ENCODE measurements at regions of chr1 and their contacts with region 1.

Region 1: DNA sequence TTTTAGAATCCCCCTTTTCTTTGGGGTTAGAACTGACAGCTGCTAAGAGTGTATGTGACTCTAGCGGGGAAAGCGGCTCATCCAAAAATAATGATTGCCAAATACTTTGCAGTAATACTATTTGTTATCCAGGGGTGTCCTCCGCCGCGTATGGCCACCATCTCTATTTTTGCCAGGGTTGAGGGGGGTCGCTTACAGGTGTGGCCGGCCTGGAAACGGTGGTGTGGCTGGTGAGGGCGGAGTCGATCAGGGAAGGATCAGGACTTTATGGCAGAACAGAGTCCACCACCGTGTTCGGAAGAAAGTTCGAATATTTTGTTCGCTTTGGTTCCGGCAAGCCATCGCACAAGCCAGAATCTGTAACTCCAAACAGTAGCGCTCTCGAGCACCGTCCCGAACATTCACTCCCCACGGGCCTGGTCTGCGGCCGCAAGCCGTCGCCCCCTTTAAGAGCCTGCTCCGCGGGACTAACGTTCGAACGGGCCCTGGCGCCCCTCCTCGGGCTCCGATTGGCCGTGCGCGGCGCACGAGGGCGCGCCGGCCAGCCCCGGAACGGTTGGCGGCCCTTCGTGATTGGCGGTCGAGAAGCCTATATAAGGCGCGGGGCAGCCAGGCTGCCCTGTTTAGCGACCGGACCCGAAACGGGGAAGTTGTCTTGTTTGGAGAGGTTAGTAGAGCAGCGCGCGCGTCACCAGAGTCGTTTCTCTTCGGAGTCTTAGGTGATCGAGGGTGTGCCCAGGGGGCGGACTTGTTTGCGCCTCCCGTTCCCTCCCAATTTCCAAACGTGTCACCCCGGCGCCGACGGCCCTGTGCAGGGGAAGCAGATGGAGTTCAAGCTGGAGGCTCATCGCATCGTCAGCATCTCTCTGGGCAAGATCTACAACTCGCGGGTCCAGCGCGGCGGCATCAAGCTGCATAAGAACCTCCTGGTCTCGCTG is at the start of gene IER5:
- DNase-seq: peak; percentile 84 to 98 (median 94)
- ATAC-seq: peak; percentile 73 to 74
- H3K4me3 Mint-ChIP-seq: peak within 1 kb of the TSS; percentile 93 to 99 (median 99)
- H3K27ac Mint-ChIP-seq: peak within 1 kb of the TSS; percentile 93 to 99 (median 98)
- H3K4me1 Mint-ChIP-seq: peaks cover 28 to 57% (median 46%) of the 10 kb centered on the region in 4 donors
- H3K27me3 Mint-ChIP-seq: no peaks in the 10 kb centered on the region
- polyA plus RNA-seq, gene IER5: 2.5 to 9.4 (median 8.3) TPM

Region 2: DNA sequence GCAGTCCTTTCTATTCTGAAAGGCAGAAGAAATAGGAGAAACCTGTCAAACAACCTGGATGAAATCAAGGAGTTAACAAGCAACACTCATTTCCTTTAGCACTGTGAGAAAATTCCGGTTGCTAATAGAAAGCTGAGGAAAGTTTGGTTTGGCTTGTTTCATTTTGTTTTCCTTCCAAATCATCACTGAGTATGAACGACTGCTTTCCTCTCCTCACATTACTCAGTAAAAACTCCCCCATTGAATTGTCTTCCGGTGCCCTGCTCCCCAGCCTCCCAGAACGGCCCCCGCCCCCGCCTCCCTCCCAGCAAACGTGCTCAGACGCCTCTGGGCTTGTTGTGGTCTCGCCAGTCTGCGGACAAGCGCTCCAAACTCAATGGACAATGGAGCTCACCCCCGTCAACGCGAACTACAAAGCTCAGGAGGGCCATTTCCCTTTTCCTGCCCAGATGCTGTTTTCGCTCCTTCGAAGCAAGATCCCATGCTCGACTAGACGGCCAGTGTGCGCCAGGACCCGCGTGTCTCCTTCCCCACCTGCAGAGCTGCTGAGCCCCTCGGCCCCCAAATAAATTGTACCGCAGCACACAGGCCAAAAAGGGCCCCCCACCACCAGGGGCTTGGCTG is 66.4 kb before region 1 on chr1:
- POLR2A ChIA-PET with region 1: interaction called, 21 read pairs
- DNase-seq: peak in 9 of 10 donors; percentile 28 to 74 (median 44)
- ATAC-seq: peak; percentile 40 to 48
- H3K4me3 Mint-ChIP-seq: peak overlapping the region; percentile 89 to 99 (median 96)
- H3K27ac Mint-ChIP-seq: peak overlapping the region; percentile 87 to 100 (median 95)
- H3K4me1 Mint-ChIP-seq: peaks cover 25 to 52% (median 49%) of the 10 kb centered on the region in 4 donors
- H3K27me3 Mint-ChIP-seq: peaks cover 0 to 3% (median 0%) of the 10 kb centered on the region in 5 donors

Region 3: DNA sequence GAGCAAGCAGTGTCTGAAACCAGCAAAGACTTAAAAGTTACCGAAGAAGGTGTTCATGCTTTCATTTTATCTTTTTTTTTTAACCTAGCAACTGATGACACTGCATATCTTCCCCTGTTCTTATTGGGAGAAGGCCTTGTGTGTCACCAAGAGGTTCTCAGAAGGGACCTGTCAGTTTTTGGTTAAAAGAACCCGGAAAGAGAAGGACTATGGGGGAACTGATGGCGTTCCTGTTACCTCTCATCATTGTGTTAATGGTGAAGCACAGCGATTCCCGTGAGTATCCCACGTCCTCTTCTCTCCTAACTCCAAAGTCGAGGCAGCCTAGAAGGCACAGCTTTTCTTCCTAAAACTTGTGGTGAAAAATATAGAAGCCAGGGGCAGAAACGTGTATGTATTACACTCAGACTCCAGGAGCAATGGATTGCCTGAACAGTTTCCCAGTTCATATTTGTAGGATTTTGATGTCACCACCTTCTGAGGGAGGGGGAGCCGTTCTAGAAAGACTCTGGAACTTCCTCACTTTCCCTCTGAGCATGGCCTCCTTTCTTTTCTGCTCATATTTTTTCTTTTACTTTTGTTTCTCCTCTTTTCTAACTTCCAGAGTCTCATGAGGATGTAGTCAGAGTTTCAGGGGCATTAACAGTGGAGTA is 54.4 kb before region 1 on chr1 and contains the start of gene MR1:
- POLR2A ChIA-PET with region 1: interaction called, 26 read pairs
- DNase-seq: peak in 8 of 10 donors; percentile 27 to 91 (median 62)
- ATAC-seq: peak; percentile 98
- H3K4me3 Mint-ChIP-seq: peak within 1 kb of the TSS; percentile 94 to 99 (median 98)
- H3K27ac Mint-ChIP-seq: peak within 1 kb of the TSS; percentile 98 to 100 (median 99)
- H3K4me1 Mint-ChIP-seq: peaks cover 27 to 69% (median 57%) of the 10 kb centered on the region in 4 donors
- H3K27me3 Mint-ChIP-seq: no peaks in the 10 kb centered on the region
- polyA plus RNA-seq, gene MR1: 27.8 to 35.5 (median 33.4) TPM

Region 4: GRCh38 chr1:181105134-181106021 is 17.0 kb after region 1 on chr1:
- POLR2A ChIA-PET with region 1: interaction called, 239 read pairs
- DNase-seq: peak; percentile 85 to 97 (median 90)
- ATAC-seq: peak; percentile 77 to 86
- H3K4me3 Mint-ChIP-seq: peak overlapping the region; percentile 80 to 98 (median 89)
- H3K27ac Mint-ChIP-seq: peak overlapping the region; percentile 81 to 98 (median 93)
- H3K4me1 Mint-ChIP-seq: peaks cover 25 to 61% (median 53%) of the 10 kb centered on the region in 4 donors
- H3K27me3 Mint-ChIP-seq: peaks cover 0 to 3% (median 0%) of the 10 kb centered on the region in 5 donors

Region 5: DNA sequence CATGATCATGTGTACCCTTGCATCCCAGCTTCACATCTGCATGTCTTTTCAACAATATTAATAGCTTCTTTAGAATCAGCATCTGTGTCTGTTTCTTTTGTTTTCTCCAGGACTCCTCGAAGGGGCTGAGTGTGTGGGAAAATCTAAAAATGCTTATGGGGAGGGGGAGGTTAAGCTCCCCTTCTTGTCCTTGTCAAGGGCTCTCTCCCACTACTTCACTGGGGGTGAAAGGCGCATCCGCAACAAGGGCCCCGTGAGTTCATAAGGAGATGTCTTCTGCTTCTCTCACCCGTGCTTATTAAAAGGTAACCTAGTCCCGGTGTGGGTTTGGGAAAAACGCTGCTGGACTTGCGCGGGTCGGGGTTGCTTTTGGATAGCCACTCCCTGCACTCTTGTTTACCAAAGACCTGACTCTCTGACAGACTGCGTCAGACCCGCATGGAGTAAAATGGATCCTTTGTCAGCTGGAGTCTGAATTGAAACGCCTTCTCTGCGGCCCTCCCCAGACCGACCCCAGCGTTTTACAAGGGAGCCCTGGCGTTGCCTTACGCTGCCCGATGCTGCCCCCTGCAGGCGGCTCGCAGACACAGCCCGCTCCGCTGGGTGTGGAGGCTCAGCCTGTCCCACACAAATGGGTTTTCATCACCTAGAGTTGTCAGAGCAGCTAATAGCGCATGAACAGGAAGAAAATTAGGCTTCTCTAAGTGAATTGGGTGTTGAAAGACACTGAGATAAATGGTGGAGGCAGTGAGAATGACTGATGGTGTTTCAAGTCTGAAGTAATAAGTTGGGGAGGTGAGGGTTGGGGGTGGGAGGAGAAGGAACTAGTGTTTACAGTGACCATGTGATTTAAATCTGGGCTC is 54.0 kb after region 1 on chr1:
- POLR2A ChIA-PET with region 1: interaction called, 42 read pairs
- DNase-seq: peak; percentile 73 to 91 (median 86)
- ATAC-seq: peak; percentile 100
- H3K4me3 Mint-ChIP-seq: peak overlapping the region in 3 of 10 donors; percentile 19 to 40 (median 35)
- H3K27ac Mint-ChIP-seq: peak overlapping the region in 4 of 10 donors; percentile 37 to 86 (median 79)
- H3K4me1 Mint-ChIP-seq: peaks cover 17 to 46% (median 32%) of the 10 kb centered on the region in 4 donors
- H3K27me3 Mint-ChIP-seq: peaks cover 0 to 4% (median 0%) of the 10 kb centered on the region in 5 donors

Region 6: GRCh38 chr1:181219938-181220337 is 131.6 kb after region 1 on chr1:
- POLR2A ChIA-PET with region 1: no interaction called
- DNase-seq: no peak
- ATAC-seq: no peak
- H3K4me3 Mint-ChIP-seq: no peak overlapping the region
- H3K27ac Mint-ChIP-seq: peak overlapping the region in 3 of 10 donors; percentile 0 to 71 (median 64)
- H3K4me1 Mint-ChIP-seq: peaks cover 0 to 8% (median 0%) of the 10 kb centered on the region in 4 donors
- H3K27me3 Mint-ChIP-seq: peaks cover 0 to 13% (median 5%) of the 10 kb centered on the region in 5 donors